Calu3 (cell line): ENCODE measurements at regions of chr5 and their contacts with region 1.

Region 1: DNA sequence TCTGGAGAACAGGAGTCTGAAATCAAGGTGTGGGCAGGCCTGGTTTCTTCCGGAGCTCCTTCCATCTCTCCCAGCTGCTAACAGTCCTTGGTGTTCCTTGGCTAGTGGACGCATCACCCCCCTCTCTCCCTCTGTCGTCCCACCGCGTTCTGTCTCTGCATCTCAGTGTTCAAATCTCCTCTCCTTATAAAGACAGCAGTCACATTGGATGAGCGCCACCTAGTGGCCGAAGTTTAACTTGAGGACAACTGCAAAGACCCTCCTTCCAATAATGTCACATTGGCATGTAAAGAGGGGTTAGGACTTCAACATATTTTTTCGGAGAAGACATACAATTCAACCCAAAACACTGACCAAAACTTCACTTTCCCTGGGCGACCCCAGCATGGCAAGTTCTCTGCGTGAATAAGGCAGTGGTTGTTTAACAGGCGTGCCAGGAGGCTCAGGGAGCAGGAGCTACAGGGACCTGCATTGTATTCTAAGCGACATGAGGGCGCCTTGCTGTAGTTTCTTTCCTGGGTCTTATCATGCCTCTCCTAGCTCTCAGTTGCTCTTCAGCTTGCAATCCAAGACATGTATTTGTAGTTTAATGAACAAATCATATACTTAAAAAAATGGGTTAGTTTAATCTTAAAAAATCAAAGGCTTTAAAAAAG is 27.9 kb upstream of the BASP1 start:
- DNase-seq: peak; percentile 80
- H3K4me3 Mint-ChIP-seq: peak overlapping the region; percentile 15
- H3K27ac Mint-ChIP-seq: peak overlapping the region; percentile 64
- H3K4me1 Mint-ChIP-seq: peaks cover 41% of the 10 kb centered on the region
- H3K27me3 Mint-ChIP-seq: no peaks in the 10 kb centered on the region
- CTCF ChIP-seq: peak; percentile 88

Region 2: GRCh38 chr5:16690243-16690852 is 499.2 kb before region 1 on chr5:
- CTCF ChIA-PET with region 1: no interaction called
- intact Hi-C with region 1: loop called (anchors 1 kb)
- DNase-seq: peak; percentile 73
- H3K4me3 Mint-ChIP-seq: no peak overlapping the region
- H3K27ac Mint-ChIP-seq: peak overlapping the region; percentile 30
- H3K4me1 Mint-ChIP-seq: no peaks in the 10 kb centered on the region
- H3K27me3 Mint-ChIP-seq: no peaks in the 10 kb centered on the region
- CTCF ChIP-seq: peak; percentile 82

Region 3: GRCh38 chr5:16791036-16791705 is 398.3 kb before region 1 on chr5:
- CTCF ChIA-PET with region 1: interaction called, 7 read pairs
- intact Hi-C with region 1: loop called (anchors 1 kb)
- DNase-seq: peak; percentile 50
- H3K4me3 Mint-ChIP-seq: no peak overlapping the region
- H3K27ac Mint-ChIP-seq: no peak overlapping the region
- H3K4me1 Mint-ChIP-seq: peaks cover 31% of the 10 kb centered on the region
- H3K27me3 Mint-ChIP-seq: no peaks in the 10 kb centered on the region
- CTCF ChIP-seq: peak; percentile 64

Region 4: DNA sequence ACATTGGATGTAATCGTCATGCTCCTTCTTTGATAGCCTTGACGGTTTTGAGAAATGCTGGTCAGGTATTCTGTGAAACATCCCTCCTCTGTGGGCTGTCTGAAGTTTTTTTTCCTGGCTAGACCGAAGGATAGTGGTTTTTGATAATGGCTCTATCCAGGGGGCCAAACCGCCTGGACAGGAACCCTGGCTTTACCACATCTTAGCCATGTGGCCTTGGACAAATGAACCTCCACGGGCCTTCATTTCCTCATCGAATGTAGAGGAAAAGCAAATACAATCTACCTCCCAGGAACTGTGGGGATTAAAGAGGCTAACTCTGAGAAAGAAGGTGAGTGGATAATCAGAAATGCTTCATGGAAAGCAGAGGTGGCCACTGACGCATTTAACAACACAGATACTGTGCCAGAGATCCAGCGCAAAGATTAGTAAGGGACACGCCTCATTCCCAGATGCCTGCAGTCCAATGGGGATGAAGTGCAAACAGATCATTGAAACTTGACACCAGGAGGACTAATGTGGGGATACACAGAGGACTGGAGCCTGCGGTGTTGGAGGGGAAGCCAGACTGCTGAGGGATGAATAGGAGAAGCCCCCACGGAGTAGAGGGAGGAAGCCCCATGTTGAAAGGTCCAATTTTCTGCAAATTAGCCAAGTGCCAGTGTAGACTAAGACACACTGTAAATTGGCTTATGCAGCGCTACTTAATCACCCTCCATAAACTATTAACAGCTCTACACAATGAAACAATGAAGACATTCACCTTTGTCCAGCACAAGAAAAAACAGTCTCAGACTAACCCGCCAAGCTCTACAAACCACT is 295.1 kb before region 1 on chr5:
- CTCF ChIA-PET with region 1: interaction called, 4 read pairs
- intact Hi-C with region 1: loop called (anchors 1 kb)
- DNase-seq: peak; percentile 75
- H3K4me3 Mint-ChIP-seq: peak overlapping the region; percentile 63
- H3K27ac Mint-ChIP-seq: peak overlapping the region; percentile 95
- H3K4me1 Mint-ChIP-seq: peaks cover 79% of the 10 kb centered on the region
- H3K27me3 Mint-ChIP-seq: no peaks in the 10 kb centered on the region
- CTCF ChIP-seq: no peak

Region 5: DNA sequence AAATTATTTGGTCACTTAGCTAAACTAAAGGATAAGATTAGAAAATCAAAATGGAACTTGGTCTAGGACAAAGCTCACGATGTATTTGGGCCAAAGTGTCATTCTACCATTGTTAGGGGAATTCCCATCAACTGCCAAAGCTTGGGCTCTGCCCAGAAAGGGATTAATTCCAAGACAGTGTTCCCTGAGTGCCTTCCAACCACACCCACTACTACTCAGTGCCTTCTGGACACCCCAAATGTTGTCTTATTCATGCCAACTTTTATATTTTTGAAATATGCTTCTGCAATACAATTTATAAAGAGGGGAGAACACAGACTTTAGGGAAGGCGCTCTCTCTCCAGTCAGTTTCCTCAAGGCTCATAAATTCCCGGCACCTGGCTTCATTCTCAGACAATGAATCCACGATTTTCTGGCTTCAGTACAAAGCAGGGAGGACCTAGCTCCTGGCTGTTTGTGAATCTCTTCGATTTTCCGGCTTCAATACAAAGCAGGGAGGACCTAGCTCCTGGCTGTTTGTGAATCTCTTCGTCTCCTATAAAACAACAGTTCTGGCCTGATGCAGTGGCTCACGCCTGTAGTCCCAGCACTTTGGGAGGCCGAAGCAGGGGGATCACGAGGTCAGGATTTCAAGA is 133.3 kb before region 1 on chr5:
- CTCF ChIA-PET with region 1: no interaction called
- intact Hi-C with region 1: loop called (anchors 10 kb)
- DNase-seq: no peak
- H3K4me3 Mint-ChIP-seq: no peak overlapping the region
- H3K27ac Mint-ChIP-seq: no peak overlapping the region
- H3K4me1 Mint-ChIP-seq: peaks cover 35% of the 10 kb centered on the region
- H3K27me3 Mint-ChIP-seq: no peaks in the 10 kb centered on the region
- CTCF ChIP-seq: no peak

Region 6: DNA sequence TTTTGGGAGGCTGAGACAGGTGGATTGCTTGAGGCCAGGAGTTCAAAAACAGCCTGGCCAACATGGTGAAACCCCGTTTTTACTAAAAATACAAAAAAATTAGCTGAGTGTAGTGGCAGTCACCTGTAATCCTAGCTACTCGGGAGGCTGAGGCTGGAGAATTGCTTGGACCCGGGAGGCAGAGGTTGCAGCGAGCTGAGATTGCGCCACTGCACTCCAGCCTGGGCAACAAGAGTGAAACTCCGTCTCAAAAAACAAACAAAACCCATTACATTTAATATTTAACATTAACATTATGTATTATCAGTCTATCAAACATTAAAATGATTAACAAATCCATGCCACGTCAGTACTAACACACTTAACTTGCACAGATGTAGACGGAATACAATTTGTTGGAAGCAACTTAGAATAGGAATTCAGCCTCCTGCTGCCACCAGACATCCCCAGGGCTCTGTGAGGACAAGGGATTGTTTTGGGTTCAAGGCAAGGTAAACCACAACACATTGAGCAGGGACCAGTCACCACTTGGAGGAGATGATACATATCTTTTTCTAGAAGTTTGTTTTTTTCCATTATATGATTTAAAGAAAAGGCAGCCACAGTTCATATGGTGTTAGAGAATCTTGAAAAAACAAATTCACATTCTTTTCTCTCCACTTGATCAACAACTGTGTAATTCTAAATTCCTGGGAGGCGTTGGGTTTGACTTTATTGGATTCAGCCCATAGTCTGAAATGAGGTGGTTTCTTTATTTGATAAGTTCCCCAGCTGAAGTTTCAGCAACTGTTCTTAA is 76.1 kb before region 1 on chr5:
- CTCF ChIA-PET with region 1: interaction called, 4 read pairs
- intact Hi-C with region 1: loop called (anchors 5 kb)
- DNase-seq: peak; percentile 49
- H3K4me3 Mint-ChIP-seq: peak overlapping the region; percentile 59
- H3K27ac Mint-ChIP-seq: peak overlapping the region; percentile 96
- H3K4me1 Mint-ChIP-seq: peaks cover 54% of the 10 kb centered on the region
- H3K27me3 Mint-ChIP-seq: no peaks in the 10 kb centered on the region
- CTCF ChIP-seq: no peak

Region 7: GRCh38 chr5:17221843-17222636 is 32.5 kb after region 1 on chr5:
- CTCF ChIA-PET with region 1: no interaction called
- intact Hi-C with region 1: no loop called
- DNase-seq: no peak
- H3K4me3 Mint-ChIP-seq: no peak overlapping the region
- H3K27ac Mint-ChIP-seq: no peak overlapping the region
- H3K4me1 Mint-ChIP-seq: no peaks in the 10 kb centered on the region
- H3K27me3 Mint-ChIP-seq: peaks cover 54% of the 10 kb centered on the region
- CTCF ChIP-seq: no peak

Region 8: DNA sequence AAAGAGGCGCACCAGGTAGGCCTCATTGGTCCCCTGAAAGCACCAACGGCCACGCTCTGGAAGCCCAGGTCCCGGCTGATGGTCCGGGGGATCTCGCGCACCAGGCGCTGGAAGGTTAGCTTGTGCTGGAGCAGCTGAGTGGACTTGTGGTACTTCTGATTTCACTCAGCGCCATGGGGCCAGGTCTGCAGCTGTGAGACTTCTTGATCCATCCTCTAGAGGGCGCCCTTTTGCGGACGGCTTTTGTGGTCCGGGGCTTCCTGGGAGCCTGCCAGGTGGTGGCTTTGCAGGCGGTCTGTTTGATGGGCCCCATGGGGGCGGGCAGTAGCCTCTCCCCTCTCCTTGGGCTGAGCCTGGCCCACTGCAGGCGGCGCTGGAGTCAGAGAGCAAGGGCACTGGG is 431.1 kb after region 1 on chr5:
- CTCF ChIA-PET with region 1: no interaction called
- intact Hi-C with region 1: no loop called
- DNase-seq: no peak
- H3K4me3 Mint-ChIP-seq: no peak overlapping the region
- H3K27ac Mint-ChIP-seq: no peak overlapping the region
- H3K4me1 Mint-ChIP-seq: no peaks in the 10 kb centered on the region
- H3K27me3 Mint-ChIP-seq: no peaks in the 10 kb centered on the region
- CTCF ChIP-seq: no peak